A673 (cell line): ENCODE measurements at regions of chr3 and their contacts with region 1.

Region 1: DNA sequence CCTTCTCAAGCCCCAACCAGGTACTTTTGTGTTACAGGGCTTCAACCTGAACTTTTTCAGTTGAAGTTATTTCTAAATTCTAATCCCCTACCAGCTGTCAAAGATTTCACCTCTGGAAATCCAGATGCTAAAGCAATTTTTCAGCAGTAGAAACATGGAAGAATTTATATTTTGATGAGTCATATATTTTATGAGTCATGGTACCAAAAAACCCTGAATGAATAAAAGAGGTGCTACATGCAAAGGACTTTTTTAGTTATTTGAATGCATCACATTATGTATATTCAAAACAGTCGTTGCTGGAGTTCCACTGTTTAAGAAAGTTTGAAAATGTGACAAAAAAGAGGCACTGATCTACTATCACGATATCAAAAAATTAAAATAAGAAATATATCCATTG is 96.0 kb upstream of the ZNF385D start:
- DNase-seq: no peak
- H3K4me3 ChIP-seq: no peak overlapping the region
- H3K27ac ChIP-seq: no peak overlapping the region
- H3K4me1 ChIP-seq: no peaks in the 10 kb centered on the region
- H3K27me3 ChIP-seq: no peaks in the 10 kb centered on the region
- CTCF ChIP-seq: no peak

Region 2: DNA sequence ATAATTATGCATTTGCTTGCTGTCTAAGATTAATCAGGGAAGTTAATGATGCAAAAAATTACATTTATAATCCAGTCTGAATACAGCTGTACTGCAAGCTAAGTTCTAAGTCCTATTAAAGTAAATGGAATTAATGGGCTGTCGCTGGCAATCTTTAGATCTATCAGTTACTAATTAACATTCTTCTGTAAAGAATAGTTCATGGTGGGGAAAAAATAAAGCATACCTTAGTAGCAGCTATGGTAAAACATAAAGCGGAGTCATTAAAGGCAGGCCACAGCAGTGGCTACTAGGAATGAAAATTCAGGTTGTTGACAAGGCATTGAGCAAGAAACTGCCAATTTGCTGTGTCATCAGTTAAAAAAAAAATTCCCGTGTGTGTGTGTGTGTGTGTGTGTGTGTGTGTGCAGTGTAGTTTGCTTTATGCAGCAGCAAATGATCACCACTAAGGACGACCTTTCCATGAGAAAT is 225.8 kb before region 1 on chr3:
- CTCF ChIA-PET with region 1: no interaction called
- POLR2A ChIA-PET with region 1: no interaction called
- intact Hi-C with region 1: no loop called
- DNase-seq: no peak
- H3K4me3 ChIP-seq: no peak overlapping the region
- H3K27ac ChIP-seq: no peak overlapping the region
- H3K4me1 ChIP-seq: no peaks in the 10 kb centered on the region
- H3K27me3 ChIP-seq: no peaks in the 10 kb centered on the region
- CTCF ChIP-seq: no peak

Region 3: GRCh38 chr3:21785765-21786437 is 61.1 kb before region 1 on chr3:
- CTCF ChIA-PET with region 1: no interaction called
- POLR2A ChIA-PET with region 1: interaction called, 22 read pairs
- intact Hi-C with region 1: no loop called
- DNase-seq: no peak
- H3K4me3 ChIP-seq: no peak overlapping the region
- H3K27ac ChIP-seq: no peak overlapping the region
- H3K4me1 ChIP-seq: no peaks in the 10 kb centered on the region
- H3K27me3 ChIP-seq: no peaks in the 10 kb centered on the region
- CTCF ChIP-seq: no peak